ENCODE measurements at regions of chr2 and their contacts with region 1.

Region 1: DNA sequence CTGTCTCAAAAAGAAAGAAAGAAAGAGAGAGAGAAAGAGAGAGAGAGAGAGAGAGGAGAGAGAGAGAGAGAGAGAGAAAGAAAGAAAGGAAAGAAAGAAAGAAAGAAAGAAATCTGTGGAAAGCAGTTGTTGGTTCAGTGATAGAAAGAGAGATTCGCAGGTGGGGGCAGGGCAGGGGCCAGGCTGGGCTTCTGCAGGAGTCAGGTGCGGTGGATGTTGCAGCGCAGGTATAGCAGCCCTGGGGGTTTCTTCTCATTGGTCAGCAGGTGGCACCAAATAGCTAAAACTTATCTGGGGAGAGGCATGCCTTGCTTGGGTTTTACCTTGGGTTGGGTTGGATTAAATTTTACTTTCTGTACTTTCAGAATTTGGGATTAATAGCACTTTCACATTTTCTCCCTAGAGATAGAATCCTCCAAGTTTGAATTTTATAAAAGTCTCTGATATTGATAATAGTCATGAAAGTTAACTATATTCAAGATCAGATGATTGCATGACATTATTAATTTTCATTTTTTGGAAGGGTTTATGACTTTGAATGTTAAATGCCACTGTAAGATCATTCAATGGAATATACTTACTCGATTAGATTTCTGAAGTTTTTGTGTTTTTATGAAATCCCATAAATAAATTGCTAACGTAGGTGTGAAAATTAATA is 66.6 kb downstream of the SPTBN1 start:
- DNase-seq: peak; percentile 78
- ATAC-seq: peak; percentile 99
- H3K4me3 Mint-ChIP-seq: no peak overlapping the region
- H3K27ac Mint-ChIP-seq: no peak overlapping the region
- H3K4me1 Mint-ChIP-seq: peaks cover 21% of the 10 kb centered on the region
- H3K27me3 Mint-ChIP-seq: peaks cover 9% of the 10 kb centered on the region

Region 2: GRCh38 chr2:54106631-54107454 is 415.9 kb before region 1 on chr2:
- CTCF ChIA-PET with region 1: interaction called, 15 read pairs
- POLR2A ChIA-PET with region 1: no interaction called
- DNase-seq: peak; percentile 67
- ATAC-seq: peak; percentile 89
- H3K4me3 Mint-ChIP-seq: no peak overlapping the region
- H3K27ac Mint-ChIP-seq: no peak overlapping the region
- H3K4me1 Mint-ChIP-seq: peaks cover 10% of the 10 kb centered on the region
- H3K27me3 Mint-ChIP-seq: peaks cover 6% of the 10 kb centered on the region

Region 3: DNA sequence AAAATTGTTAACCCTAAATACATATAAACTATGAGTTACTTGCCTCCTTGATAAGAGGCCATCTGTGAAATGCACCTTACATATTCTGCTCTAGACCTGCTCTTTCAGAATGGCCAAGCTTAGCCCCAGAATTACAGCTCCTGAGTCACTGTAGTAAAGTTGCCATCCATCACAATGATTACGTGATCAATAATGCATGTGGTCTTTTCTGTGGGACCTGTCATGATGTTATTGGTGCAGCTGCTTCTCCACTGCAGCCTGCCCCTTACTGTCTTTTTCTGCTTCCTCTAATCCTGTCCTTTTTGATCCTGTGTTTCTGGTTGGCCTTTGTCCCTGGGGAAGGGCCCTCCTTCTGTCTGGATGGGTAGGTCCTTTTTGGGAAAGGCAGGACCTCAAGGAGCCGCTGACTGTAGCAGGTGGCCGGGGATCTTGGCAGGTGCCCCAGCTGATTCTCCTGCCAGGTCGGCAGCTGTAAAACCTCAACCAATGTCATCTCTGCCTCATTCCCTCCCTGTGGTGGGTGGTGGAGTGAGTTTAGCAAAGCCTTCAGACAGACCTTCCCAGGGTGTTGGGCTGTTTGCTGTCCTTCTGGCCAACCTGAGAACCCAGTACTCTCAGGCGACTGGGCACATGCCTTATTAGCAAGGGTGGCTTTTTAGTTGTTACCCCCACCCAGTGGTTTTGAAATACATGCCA is 74.5 kb after region 1 on chr2:
- CTCF ChIA-PET with region 1: interaction called, 21 read pairs
- POLR2A ChIA-PET with region 1: no interaction called
- DNase-seq: peak; percentile 48
- ATAC-seq: peak; percentile 45
- H3K4me3 Mint-ChIP-seq: peak overlapping the region; percentile 70
- H3K27ac Mint-ChIP-seq: peak overlapping the region; percentile 96
- H3K4me1 Mint-ChIP-seq: peaks cover 88% of the 10 kb centered on the region
- H3K27me3 Mint-ChIP-seq: no peaks in the 10 kb centered on the region

Region 4: DNA sequence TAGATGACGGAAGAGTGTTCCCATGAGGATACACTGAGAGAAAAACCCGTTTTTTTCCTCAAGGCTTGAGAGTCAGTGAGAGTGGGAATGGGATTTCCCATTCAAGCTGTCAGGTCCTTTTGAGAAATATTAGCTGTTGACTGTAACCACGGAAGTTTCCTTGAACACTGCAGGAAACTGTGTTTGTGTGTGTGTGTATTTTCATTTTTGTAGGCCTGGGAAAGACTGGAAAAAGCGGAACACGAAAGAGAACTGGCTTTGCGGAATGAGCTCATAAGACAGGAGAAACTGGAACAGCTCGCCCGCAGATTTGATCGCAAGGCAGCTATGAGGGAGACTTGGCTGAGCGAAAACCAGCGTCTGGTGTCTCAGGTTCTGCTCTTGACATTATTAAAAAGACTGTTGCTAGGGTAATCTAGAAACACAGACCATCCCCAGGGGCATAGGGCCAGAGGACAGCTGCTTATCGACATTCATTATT is 101.9 kb after region 1 on chr2:
- CTCF ChIA-PET with region 1: interaction called, 13 read pairs
- POLR2A ChIA-PET with region 1: no interaction called
- DNase-seq: no peak
- ATAC-seq: no peak
- H3K4me3 Mint-ChIP-seq: no peak overlapping the region
- H3K27ac Mint-ChIP-seq: no peak overlapping the region
- H3K4me1 Mint-ChIP-seq: no peaks in the 10 kb centered on the region
- H3K27me3 Mint-ChIP-seq: no peaks in the 10 kb centered on the region

Region 5: DNA sequence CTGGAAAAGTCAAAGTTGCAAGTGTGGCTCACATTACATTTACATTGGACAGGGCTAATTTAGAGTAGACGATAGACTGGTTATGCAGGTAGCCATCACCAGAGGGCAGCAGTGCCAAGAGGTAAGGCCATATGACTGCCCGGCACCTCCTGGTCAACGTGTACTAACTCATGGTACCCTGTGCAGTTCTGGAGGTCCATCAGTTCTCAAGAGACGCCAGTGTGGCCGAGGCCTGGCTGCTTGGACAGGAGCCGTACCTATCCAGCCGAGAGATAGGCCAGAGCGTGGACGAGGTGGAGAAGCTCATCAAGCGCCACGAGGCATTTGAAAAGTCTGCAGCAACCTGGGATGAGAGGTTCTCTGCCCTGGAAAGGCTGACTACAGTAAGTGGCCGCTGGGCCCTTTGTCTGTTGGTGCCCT is 134.9 kb after region 1 on chr2:
- CTCF ChIA-PET with region 1: interaction called, 20 read pairs
- POLR2A ChIA-PET with region 1: no interaction called
- DNase-seq: peak; percentile 43
- ATAC-seq: no peak
- H3K4me3 Mint-ChIP-seq: no peak overlapping the region
- H3K27ac Mint-ChIP-seq: peak overlapping the region; percentile 51
- H3K4me1 Mint-ChIP-seq: peaks cover 21% of the 10 kb centered on the region
- H3K27me3 Mint-ChIP-seq: no peaks in the 10 kb centered on the region

Region 6: DNA sequence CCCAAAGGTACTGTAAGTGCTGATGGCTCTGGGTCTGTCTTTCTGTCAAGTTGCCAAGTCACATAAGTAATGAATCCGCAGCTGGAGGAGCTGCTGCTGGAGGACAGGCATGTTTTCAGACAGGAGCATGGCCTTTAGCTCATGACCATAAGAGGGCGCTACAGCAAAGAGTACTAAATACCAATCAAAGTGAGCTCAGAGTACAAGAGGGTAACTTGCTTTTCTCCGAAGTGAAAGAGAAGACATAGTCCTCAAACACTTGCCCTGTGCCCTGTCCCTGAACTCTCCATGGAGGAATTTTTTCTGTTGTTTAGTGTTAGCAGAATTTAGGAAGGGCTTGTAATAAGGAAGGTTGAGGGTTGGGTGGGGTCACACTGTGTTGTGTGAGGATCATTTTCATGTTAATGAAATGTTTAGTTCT is 142.7 kb after region 1 on chr2:
- CTCF ChIA-PET with region 1: interaction called, 53 read pairs
- POLR2A ChIA-PET with region 1: no interaction called
- DNase-seq: peak; percentile 65
- ATAC-seq: peak; percentile 77
- H3K4me3 Mint-ChIP-seq: no peak overlapping the region
- H3K27ac Mint-ChIP-seq: peak overlapping the region; percentile 43
- H3K4me1 Mint-ChIP-seq: peaks cover 14% of the 10 kb centered on the region
- H3K27me3 Mint-ChIP-seq: no peaks in the 10 kb centered on the region

Measured in activated CD8-positive, alpha-beta T cell treated with anti-CD3 and anti-CD28 coated beads, Interleukin-2, amount 10 ng/mL, durations not matched to agents 7 days and 5 days (primary cell).